Vagina (tissue), 2 donors: ENCODE measurements at regions of chr1 and their contacts with region 1.

Region 1: DNA sequence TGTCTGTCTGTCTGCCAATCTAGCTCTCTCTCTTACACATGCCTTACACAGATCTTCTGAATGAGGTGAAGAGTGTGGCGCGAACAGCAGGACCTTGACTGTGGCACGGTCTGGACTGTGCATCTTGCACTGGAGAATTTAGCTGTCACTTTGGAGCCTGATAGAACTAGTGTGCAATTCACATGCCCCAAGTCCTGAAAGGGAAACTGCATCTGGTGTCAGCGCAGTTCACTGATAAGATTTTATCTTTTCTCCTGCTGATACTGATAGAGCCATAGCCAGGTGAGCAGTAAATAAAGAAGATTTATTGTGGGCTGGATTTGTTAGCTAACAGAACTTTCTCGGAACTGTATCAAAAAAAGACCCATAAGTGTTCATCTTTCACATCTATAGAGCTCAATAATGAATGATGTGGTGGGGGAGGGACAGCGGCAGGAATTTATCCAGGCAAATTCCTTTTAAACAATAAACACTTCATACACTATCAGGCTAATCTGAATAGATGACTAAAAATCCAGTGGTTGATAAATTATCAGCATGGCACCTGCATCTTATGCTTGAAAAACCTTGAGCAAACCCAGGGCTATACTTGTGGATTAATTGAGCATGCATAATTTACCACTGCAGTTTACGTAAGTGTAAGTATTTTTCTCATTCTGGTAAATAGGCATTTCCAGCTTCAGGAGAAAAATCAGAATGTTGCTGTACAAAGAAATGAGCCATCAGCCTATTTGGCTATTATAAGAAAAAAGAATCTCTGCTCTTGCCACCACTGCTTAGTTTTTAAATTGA is 104.1 kb downstream of the NTNG1 start:
- DNase-seq: no peak
- H3K4me3 ChIP-seq: no peak overlapping the region
- H3K27ac ChIP-seq: no peak overlapping the region
- H3K4me1 ChIP-seq: no peaks in the 10 kb centered on the region
- H3K27me3 ChIP-seq: no peaks in the 10 kb centered on the region
- CTCF ChIP-seq: no peak
- POLR2A ChIP-seq: no peak

Region 2: DNA sequence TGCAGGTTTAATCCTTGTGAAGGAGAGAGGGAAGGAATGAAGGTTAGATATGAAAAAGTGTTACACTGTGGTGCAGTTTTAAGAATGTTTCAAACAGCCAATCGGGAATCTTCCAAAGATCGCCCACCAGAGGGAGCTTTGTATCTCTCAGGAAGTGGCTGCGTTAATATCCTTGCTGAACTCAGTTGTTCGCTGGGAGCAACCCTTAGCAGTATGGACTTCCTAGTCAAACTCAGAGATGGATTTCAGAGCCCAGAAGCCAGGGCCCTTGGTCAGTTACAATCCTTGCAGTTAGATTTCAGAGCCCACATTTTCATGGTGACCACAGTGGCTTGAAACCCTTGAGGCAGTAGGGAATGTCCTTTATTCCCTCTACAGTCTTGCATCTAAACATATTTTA is 32.1 kb after region 1 on chr1:
- intact Hi-C with region 1: loop called (anchors 1 kb)
- DNase-seq: no peak
- H3K4me3 ChIP-seq: no peak overlapping the region
- H3K27ac ChIP-seq: no peak overlapping the region
- H3K4me1 ChIP-seq: no peaks in the 10 kb centered on the region
- H3K27me3 ChIP-seq: no peaks in the 10 kb centered on the region
- CTCF ChIP-seq: peak in 2 of 3 experiments; percentile 14 to 45
- POLR2A ChIP-seq: no peak